Mammary epithelial cell (primary cell): ENCODE measurements at regions of chr1 and their contacts with region 1.

Region 1: GRCh38 chr1:169367486-169368405 is at the starts of genes BLZF1 and NME7:
- DNase-seq: peak; percentile 98
- H3K4me3 ChIP-seq: peak within 1 kb of the TSS; percentile 74 to 98 (median 87)
- H3K27ac ChIP-seq: peak within 1 kb of the TSS; percentile 98
- H3K4me1 ChIP-seq: peaks cover 46% of the 10 kb centered on the region
- H3K27me3 ChIP-seq: no peaks in the 10 kb centered on the region
- CTCF ChIP-seq: no peak
- total RNA-seq, gene BLZF1: 36.5 to 48.3 TPM
- total RNA-seq, gene NME7: 26.5 to 35.6 TPM

Region 2: DNA sequence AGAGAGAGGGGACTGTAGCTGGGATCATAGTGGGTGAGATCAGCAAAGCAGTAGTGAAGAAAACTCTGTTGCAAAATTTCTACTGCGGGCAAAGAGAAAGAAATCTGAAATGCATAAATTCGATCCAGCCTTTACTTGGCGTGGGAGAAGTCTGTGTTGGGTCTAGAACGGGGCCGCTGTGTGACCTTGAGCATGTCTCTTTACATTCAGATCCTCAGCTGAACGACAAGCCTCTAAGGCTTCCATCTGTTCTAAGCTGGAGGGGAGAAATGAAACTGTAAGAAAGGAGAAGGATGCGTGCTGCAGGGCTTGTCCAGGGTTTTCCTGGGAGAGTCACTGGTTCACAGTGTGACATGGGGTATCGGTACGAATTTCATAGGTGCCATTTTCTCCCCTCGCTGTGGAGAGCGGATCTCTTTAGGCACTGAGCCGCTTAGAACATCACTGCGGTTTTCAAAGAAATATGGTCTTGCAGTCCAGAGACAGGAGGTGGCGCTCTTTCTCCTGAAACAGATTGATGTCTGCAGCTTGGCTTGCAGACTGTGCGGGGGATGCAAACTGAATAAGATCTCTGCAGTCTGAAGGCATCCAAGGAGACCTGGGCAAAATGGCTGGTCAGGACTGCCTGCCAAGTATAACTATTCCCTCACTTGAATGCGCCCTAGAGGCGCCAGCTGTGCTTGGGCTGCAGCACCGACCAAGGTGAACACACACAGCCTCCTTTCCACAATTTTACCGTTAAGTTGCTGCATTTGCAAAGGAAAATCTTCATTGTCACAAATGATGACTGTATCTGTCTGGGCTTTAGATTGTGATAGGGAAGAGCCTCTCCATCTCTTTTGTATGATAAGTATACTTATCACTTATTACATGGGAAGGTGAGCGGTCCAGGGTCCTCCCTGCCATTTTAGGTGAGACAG is 928.0 kb before region 1 on chr1:
- CTCF ChIA-PET with region 1: no interaction called
- dilution Hi-C with region 1: no loop called
- in situ Hi-C with region 1: no loop called
- intact Hi-C with region 1: loop called (anchors 10 kb)
- DNase-seq: peak; percentile 74
- H3K4me3 ChIP-seq: no peak overlapping the region
- H3K27ac ChIP-seq: no peak overlapping the region
- H3K4me1 ChIP-seq: peaks cover 9% of the 10 kb centered on the region
- H3K27me3 ChIP-seq: no peaks in the 10 kb centered on the region
- CTCF ChIP-seq: peak; percentile 84 to 85

Region 3: GRCh38 chr1:168709405-168710305 is 658.1 kb before region 1 on chr1:
- CTCF ChIA-PET with region 1: no interaction called
- dilution Hi-C with region 1: no loop called
- in situ Hi-C with region 1: no loop called
- intact Hi-C with region 1: loop called (anchors 10 kb)
- DNase-seq: peak; percentile 98
- H3K4me3 ChIP-seq: no peak overlapping the region
- H3K27ac ChIP-seq: peak overlapping the region; percentile 99
- H3K4me1 ChIP-seq: peaks cover 26% of the 10 kb centered on the region
- H3K27me3 ChIP-seq: no peaks in the 10 kb centered on the region
- CTCF ChIP-seq: peak in 1 of 2 donors; percentile 9

Region 4: DNA sequence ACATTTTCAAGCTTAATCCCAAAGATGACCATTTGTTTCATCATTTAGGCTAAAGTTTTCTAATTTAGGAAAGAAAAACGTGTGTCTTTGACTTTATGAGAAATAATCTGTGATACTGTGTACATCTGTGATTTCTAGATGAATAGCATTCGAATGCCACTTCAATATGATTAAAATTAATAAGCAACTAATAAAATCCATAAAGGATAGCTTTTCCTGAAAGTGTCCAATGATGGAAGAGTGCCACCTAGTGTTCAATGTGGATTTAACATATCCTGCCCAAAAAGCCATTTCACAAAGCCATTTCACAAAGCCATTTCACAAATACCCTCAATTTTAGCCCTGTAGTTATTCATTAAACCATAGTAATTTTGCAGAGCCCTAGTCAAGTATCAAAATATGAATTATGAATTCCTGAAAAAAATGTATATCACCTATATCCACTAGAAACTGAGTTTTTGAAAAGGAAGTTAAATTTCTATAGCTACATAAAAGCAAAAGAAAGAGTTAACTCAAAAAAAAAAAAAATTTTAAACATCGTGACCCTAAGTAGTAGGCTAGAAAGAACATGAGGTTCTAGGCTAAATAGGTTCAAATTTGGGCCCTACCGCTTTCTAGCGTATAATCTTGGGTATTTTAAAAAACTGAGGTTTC is 19.2 kb before region 1 on chr1:
- CTCF ChIA-PET with region 1: interaction called, 26 read pairs
- dilution Hi-C with region 1: no loop called
- in situ Hi-C with region 1: no loop called
- intact Hi-C with region 1: no loop called
- DNase-seq: peak; percentile 32
- H3K4me3 ChIP-seq: no peak overlapping the region
- H3K27ac ChIP-seq: no peak overlapping the region
- H3K4me1 ChIP-seq: no peaks in the 10 kb centered on the region
- H3K27me3 ChIP-seq: no peaks in the 10 kb centered on the region
- CTCF ChIP-seq: peak; percentile 55 to 73

Region 5: GRCh38 chr1:169395955-169396354 is 28.2 kb after region 1 on chr1:
- CTCF ChIA-PET with region 1: no interaction called
- dilution Hi-C with region 1: no loop called
- in situ Hi-C with region 1: no loop called
- intact Hi-C with region 1: no loop called
- DNase-seq: no peak
- H3K4me3 ChIP-seq: no peak overlapping the region
- H3K27ac ChIP-seq: no peak overlapping the region
- H3K4me1 ChIP-seq: no peaks in the 10 kb centered on the region
- H3K27me3 ChIP-seq: no peaks in the 10 kb centered on the region
- CTCF ChIP-seq: no peak

Region 6: DNA sequence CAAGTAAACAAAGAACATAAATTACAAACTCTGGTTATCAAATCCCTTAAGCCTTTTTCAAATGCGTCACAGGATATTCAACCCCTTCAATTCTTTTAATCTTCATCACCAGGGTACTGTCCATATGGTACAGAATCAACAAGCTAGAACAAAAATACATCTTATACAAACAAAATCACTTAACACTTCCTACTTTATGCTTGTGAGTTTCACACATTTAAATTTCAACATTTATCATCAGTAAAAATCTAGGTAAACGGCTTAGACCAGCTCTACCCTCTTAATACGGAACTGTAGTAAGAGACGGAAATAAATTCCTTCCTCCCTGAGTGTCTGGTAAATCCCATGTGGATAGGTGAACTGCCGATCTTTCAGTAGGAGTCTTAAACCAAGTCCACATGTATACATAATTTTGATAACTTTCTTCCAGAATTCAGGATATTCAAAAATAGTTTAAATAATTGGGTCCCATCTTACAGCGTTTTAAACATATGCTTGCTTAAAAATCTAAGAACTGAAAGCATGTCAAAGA is 58.5 kb after region 1 on chr1:
- CTCF ChIA-PET with region 1: no interaction called
- dilution Hi-C with region 1: no loop called
- in situ Hi-C with region 1: no loop called
- intact Hi-C with region 1: no loop called
- DNase-seq: no peak
- H3K4me3 ChIP-seq: no peak overlapping the region
- H3K27ac ChIP-seq: no peak overlapping the region
- H3K4me1 ChIP-seq: peaks cover 5% of the 10 kb centered on the region
- H3K27me3 ChIP-seq: peaks cover 34% of the 10 kb centered on the region
- CTCF ChIP-seq: no peak

Region 7: GRCh38 chr1:169529068-169529696 is 161.4 kb after region 1 on chr1:
- CTCF ChIA-PET with region 1: no interaction called
- dilution Hi-C with region 1: no loop called
- in situ Hi-C with region 1: no loop called
- intact Hi-C with region 1: loop called (anchors 5 kb)
- DNase-seq: peak; percentile 95
- H3K4me3 ChIP-seq: peak overlapping the region in 2 of 3 experiments; percentile 13 to 15
- H3K27ac ChIP-seq: peak overlapping the region; percentile 55
- H3K4me1 ChIP-seq: peaks cover 27% of the 10 kb centered on the region
- H3K27me3 ChIP-seq: no peaks in the 10 kb centered on the region
- CTCF ChIP-seq: no peak

Region 8: GRCh38 chr1:169604781-169605560 is 237.2 kb after region 1 on chr1:
- CTCF ChIA-PET with region 1: no interaction called
- dilution Hi-C with region 1: no loop called
- in situ Hi-C with region 1: no loop called
- intact Hi-C with region 1: no loop called
- DNase-seq: no peak
- H3K4me3 ChIP-seq: no peak overlapping the region
- H3K27ac ChIP-seq: no peak overlapping the region
- H3K4me1 ChIP-seq: no peaks in the 10 kb centered on the region
- H3K27me3 ChIP-seq: no peaks in the 10 kb centered on the region
- CTCF ChIP-seq: no peak